ENCODE measurements at regions of chr19 and their contacts with region 1.

Region 1: DNA sequence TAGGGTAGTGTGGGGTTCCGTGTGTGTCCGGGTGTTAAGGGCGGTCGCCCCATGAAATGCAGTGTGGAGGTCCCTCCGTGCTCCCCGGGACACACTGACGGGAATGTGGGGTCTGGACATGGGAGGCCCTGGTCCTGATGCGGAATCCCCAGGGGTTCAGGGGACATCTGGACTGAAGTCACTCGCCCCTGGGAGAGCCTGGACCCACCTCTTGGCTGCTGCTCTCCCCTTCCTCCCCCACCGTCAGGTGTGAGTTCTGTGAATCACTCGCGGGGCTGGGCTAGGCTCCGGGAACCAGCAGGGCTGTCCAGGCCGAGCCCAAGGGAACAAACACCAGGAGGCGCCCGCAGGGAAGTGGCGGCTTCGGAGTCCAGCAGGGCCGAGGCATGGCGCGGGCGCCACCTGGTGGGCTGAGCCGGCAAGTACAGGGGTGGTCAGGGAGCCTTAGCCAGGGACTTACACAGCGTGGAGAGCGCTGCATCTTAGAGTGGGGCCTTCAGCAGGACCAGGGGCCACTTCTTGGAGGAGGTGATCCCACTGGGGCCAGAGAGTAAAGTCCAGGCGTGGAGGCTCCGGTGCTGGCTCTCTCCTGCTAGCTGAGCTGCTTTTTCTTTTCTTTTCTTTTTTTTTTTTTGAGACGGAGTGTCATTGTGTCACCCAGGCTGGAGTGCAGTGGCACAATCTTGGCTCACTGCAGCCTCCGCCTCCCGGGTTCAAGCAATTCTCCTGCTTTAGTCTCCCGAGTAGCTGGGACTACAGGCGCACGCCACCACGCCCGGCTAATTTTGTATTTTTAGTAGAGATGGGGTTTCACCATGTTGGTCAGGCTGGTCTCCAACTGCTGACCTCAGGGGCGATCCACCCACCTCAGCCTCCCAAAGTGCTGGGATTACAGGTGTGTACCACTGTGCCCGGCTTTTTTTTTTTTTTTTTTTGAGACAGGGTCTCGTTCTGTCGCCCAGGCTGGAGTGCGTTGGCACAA is 20.1 kb downstream of the WTIP start:
- DNase-seq: peak; percentile 83
- ATAC-seq: peak; percentile 78
- H3K4me3 Mint-ChIP-seq: peak overlapping the region; percentile 63
- H3K27ac Mint-ChIP-seq: no peak overlapping the region
- H3K4me1 Mint-ChIP-seq: peaks cover 15% of the 10 kb centered on the region
- H3K27me3 Mint-ChIP-seq: peaks cover 6% of the 10 kb centered on the region
- CTCF ChIP-seq: peak; percentile 71

Region 2: DNA sequence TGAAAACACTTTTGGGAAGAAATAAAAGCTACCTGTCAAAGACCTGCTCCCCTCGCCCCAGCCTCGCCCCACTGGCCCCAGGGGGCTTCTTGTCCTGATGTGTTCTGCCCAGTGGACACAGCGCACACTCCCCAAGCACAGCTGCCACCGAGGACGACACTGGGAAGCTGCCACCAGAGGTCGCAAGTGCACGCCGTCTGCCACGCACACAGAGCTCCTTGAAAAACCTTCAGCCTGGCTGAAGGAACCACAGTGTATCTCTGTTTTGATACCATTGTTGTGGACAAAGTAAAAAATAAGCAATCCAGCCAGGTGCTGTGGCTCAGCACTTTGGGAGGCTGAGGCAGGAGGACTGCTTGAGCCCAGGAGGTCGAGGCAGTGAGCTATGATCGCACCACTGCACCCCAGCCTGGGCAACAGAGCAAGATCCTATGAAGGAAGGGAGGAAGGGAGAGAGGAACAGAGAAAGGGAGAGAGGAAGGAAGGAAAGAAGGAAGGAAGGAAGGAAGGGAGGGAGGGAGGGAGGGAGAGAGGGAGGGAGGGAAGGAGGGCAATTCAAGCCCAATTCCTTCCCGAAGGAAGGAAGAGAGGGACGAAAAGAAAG is 1070.9 kb before region 1 on chr19:
- CTCF ChIA-PET with region 1: no interaction called
- POLR2A ChIA-PET with region 1: no interaction called
- intact Hi-C with region 1: loop called (anchors 5 kb)
- DNase-seq: peak; percentile 38
- ATAC-seq: peak; percentile 66
- H3K4me3 Mint-ChIP-seq: no peak overlapping the region
- H3K27ac Mint-ChIP-seq: no peak overlapping the region
- H3K4me1 Mint-ChIP-seq: no peaks in the 10 kb centered on the region
- H3K27me3 Mint-ChIP-seq: peaks cover 2% of the 10 kb centered on the region
- CTCF ChIP-seq: no peak

Region 3: GRCh38 chr19:34359140-34359953 is 142.3 kb before region 1 on chr19:
- CTCF ChIA-PET with region 1: no interaction called
- POLR2A ChIA-PET with region 1: no interaction called
- intact Hi-C with region 1: loop called (anchors 1 kb)
- DNase-seq: peak; percentile 97
- ATAC-seq: peak; percentile 93
- H3K4me3 Mint-ChIP-seq: peak overlapping the region; percentile 92
- H3K27ac Mint-ChIP-seq: peak overlapping the region; percentile 95
- H3K4me1 Mint-ChIP-seq: peaks cover 26% of the 10 kb centered on the region
- H3K27me3 Mint-ChIP-seq: no peaks in the 10 kb centered on the region
- CTCF ChIP-seq: no peak

Region 4: DNA sequence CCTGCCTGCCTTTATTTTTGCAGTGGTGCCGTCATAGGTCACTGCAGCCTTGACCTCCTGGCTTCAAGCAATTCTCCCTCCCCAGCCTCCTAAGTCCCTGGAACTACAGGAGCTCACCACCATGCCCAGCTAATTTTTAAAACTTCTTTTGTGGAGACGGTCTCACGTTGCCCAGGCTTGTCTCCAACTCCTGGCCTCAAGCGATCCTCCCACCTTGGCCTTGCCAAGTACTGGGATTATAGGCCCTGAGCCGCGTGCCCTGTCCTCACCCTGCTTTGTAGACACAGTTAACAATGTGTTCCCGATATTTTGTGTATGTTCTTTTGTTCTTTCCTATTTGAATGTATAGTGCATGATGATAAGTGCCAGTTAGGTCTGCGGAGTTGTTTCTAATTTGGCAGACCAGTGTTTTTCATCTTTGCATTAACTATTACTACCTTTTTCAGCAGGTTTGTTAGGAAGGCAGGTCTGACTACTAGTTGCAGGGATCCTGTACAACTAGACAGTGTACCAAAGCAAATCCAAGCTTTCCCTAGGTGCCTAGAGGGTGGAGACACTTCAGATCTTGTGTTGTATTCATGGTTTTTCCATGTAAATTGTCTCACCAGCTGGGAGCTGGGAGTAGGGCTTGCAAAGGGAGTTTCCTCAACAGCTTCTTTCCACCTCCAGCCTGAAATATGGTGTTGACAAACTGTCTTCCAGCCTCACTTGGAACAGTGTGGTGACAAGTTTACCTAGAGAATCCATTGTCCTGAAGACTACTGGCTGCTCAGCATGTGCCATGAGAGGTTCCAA is 29.5 kb before region 1 on chr19:
- CTCF ChIA-PET with region 1: no interaction called
- POLR2A ChIA-PET with region 1: no interaction called
- intact Hi-C with region 1: loop called (anchors 2 kb)
- DNase-seq: no peak
- ATAC-seq: no peak
- H3K4me3 Mint-ChIP-seq: no peak overlapping the region
- H3K27ac Mint-ChIP-seq: peak overlapping the region; percentile 21
- H3K4me1 Mint-ChIP-seq: no peaks in the 10 kb centered on the region
- H3K27me3 Mint-ChIP-seq: no peaks in the 10 kb centered on the region
- CTCF ChIP-seq: no peak

Measured in activated B cell treated with CpG ODN at 0.5 μM for 24 hours (primary cell).